ENCODE measurements at regions of chr3 and their contacts with region 1.

Region 1: GRCh38 chr3:161310649-161311423 is 60.5 kb downstream of the SPTSSB start:
- DNase-seq: peak in 8 of 9 donors; percentile 39 to 77 (median 66)
- ATAC-seq: peak; percentile 87
- H3K4me3 ChIP-seq: no peak overlapping the region
- H3K4me3 Mint-ChIP-seq: peak overlapping the region; percentile 40 to 75 (median 64)
- H3K27ac ChIP-seq: peak overlapping the region; percentile 25
- H3K27ac Mint-ChIP-seq: peak overlapping the region; percentile 33 to 85 (median 59)
- H3K4me1 ChIP-seq: peaks cover 43 to 50% of the 10 kb centered on the region in 2 donors
- H3K4me1 Mint-ChIP-seq: peaks cover 25 to 85% (median 67%) of the 10 kb centered on the region in 7 donors
- H3K27me3 ChIP-seq: no peaks in the 10 kb centered on the region
- H3K27me3 Mint-ChIP-seq: peaks cover 0 to 68% (median 0%) of the 10 kb centered on the region in 5 donors

Region 2: DNA sequence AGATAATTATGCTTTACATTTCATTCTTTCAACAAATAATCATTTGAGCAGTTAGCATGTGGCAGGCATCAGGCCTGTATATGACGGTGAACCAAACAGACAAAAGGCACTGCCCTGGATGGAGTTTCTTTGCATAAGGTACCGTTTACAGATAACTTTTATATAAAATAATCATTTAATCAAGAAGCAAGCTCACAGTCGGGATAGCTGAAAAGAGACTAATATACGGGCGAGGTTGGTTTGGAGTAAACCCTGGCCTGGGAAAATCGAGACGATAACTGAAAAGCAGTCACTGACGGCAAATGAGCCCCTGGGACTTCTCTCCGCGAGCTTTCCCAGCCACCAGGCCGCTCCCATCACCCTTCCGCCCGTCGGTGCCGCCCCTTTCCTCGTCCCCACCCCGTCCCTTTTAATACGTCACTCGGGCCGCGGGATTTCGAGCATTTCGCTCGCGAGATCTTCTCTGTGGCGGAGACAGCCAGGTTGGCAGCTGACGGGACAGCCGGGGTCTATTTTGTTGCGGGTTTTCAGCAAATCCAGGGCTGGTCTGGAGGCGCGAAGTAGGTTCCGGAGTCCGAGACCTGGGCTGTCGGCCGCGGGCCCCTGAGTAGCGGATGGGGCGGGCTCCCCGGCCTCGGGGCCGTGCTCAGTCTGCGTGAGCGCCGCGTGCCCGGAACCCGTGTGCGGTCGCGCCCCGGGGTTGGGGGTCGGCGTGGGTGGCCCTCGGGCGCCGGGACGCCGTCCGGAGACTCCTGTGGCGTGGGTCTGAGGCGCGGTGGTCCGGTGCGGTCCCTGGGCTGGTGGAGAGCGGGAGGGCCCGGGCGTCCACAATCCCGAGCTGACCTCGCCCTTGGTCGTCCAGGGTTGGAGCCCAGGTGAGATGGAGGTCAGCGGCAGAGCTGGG is 89.7 kb before region 1 on chr3 and contains the start of gene NMD3:
- CTCF ChIA-PET with region 1: interaction called, 3 read pairs
- POLR2A ChIA-PET with region 1: no interaction called
- intact Hi-C with region 1: loop called (anchors 5 kb)
- DNase-seq: peak; percentile 84 to 92 (median 89)
- ATAC-seq: peak; percentile 98
- H3K4me3 ChIP-seq: peak within 1 kb of the TSS; percentile 86
- H3K4me3 Mint-ChIP-seq: peak within 1 kb of the TSS; percentile 87 to 96 (median 93)
- H3K27ac ChIP-seq: peak within 1 kb of the TSS; percentile 97
- H3K27ac Mint-ChIP-seq: peak within 1 kb of the TSS; percentile 89 to 98 (median 94)
- H3K4me1 ChIP-seq: peaks cover 18 to 21% of the 10 kb centered on the region in 2 donors
- H3K4me1 Mint-ChIP-seq: peaks cover 12 to 52% (median 36%) of the 10 kb centered on the region in 7 donors
- H3K27me3 ChIP-seq: no peaks in the 10 kb centered on the region
- H3K27me3 Mint-ChIP-seq: peaks cover 4 to 22% (median 11%) of the 10 kb centered on the region in 5 donors
- total RNA-seq, gene NMD3: 37.3 to 52.6 (median 40.7) TPM

Region 3: DNA sequence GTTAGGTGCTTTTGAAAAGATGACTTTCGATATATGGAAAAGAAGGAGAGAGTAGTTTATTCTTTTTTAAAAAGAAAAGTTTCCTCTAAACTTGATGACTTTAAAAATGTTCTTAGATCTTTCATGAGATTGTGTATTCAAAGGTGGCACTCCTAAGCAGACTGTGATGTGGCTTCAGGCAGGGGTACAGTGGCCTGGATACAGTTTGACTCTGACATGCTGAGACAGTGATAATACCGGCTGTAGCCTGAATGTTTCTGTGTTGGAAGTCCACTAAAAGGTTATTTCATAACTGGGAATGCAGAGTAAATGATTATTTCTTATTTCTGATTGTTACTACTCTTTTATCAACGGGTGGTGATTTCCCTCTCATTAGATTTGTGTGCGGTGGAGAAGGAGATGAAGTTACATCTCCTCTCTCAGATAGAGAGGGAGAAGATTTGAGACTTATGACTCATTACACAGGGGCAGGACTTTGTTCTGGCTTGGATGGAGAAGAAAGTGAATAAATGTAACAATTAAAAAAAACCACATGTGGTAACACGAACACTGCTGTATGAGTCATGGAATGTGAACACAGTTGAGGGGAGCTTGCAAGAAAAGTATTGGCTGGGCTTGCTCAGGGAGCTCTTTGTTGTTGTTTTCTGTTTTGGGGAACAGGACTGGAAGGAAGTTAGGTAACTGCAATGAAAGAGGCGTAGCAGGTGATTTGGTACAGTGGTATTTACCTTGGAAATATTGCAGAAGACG is 38.9 kb after region 1 on chr3:
- CTCF ChIA-PET with region 1: no interaction called
- POLR2A ChIA-PET with region 1: no interaction called
- intact Hi-C with region 1: loop called in 1 of 2 experiments (anchors 1 kb)
- DNase-seq: peak in 5 of 9 donors; percentile 10 to 57 (median 23)
- ATAC-seq: peak; percentile 87
- H3K4me3 ChIP-seq: no peak overlapping the region
- H3K4me3 Mint-ChIP-seq: peak overlapping the region in 5 of 10 donors; percentile 2 to 40 (median 10)
- H3K27ac ChIP-seq: no peak overlapping the region
- H3K27ac Mint-ChIP-seq: peak overlapping the region in 5 of 9 donors; percentile 2 to 49 (median 16)
- H3K4me1 ChIP-seq: peaks cover 7 to 14% of the 10 kb centered on the region in 2 donors
- H3K4me1 Mint-ChIP-seq: peaks cover 6 to 22% (median 17%) of the 10 kb centered on the region in 7 donors
- H3K27me3 ChIP-seq: no peaks in the 10 kb centered on the region
- H3K27me3 Mint-ChIP-seq: peaks cover 0 to 55% (median 0%) of the 10 kb centered on the region in 5 donors

Region 4: DNA sequence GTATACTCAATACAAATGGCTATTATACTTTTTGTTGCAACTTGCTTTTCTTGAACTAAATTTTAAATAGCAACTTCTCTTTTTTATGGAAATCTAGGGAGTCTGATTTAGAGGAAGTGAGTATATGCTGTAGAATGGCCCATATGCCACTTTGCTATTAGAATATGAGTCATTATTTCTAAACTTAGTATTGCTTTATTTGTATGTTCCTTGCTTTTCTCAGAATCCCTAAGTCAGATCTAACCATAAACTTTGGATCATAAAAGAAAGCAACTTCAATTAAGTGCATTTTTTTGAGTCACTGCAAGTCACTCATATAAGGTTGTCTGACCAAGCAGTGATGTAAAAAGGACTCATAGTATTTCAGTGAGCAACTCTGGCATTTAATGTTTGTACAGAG is 78.0 kb after region 1 on chr3:
- CTCF ChIA-PET with region 1: interaction called, 4 read pairs
- POLR2A ChIA-PET with region 1: interaction called, 3 read pairs
- intact Hi-C with region 1: loop called in 1 of 2 experiments (anchors 5 kb)
- DNase-seq: no peak
- ATAC-seq: peak; percentile 67
- H3K4me3 ChIP-seq: no peak overlapping the region
- H3K4me3 Mint-ChIP-seq: no peak overlapping the region
- H3K27ac ChIP-seq: no peak overlapping the region
- H3K27ac Mint-ChIP-seq: no peak overlapping the region
- H3K4me1 ChIP-seq: peaks cover 6 to 17% of the 10 kb centered on the region in 2 donors
- H3K4me1 Mint-ChIP-seq: peaks cover 3 to 41% (median 34%) of the 10 kb centered on the region in 7 donors
- H3K27me3 ChIP-seq: peaks cover 0 to 4% of the 10 kb centered on the region in 2 donors
- H3K27me3 Mint-ChIP-seq: peaks cover 0 to 69% (median 17%) of the 10 kb centered on the region in 5 donors